ENCODE measurements at regions of chrX and their contacts with region 1.

Region 1: GRCh38 chrX:110146521-110146920 is 143.6 kb downstream of the TMEM164 start:
- DNase-seq: peak in 2 of 5 donors; percentile 14 to 17
- H3K4me3 ChIP-seq: no peak overlapping the region
- H3K4me3 Mint-ChIP-seq: no peak overlapping the region
- H3K27ac ChIP-seq: no peak overlapping the region
- H3K27ac Mint-ChIP-seq: peak overlapping the region in 1 of 8 donors; percentile 60
- H3K4me1 ChIP-seq: peaks cover 6% of the 10 kb centered on the region
- H3K4me1 Mint-ChIP-seq: peaks cover 5 to 11% (median 11%) of the 10 kb centered on the region in 3 donors
- H3K27me3 ChIP-seq: no peaks in the 10 kb centered on the region
- H3K27me3 Mint-ChIP-seq: peaks cover 0 to 4% of the 10 kb centered on the region in 2 donors

Region 2: GRCh38 chrX:110136136-110136535 is 10.4 kb before region 1 on chrX:
- CTCF ChIA-PET with region 1: interaction called, 11 read pairs
- POLR2A ChIA-PET with region 1: no interaction called
- DNase-seq: no peak
- H3K4me3 ChIP-seq: no peak overlapping the region
- H3K4me3 Mint-ChIP-seq: no peak overlapping the region
- H3K27ac ChIP-seq: no peak overlapping the region
- H3K27ac Mint-ChIP-seq: peak overlapping the region in 1 of 8 donors; percentile 8
- H3K4me1 ChIP-seq: no peaks in the 10 kb centered on the region
- H3K4me1 Mint-ChIP-seq: no peaks in the 10 kb centered on the region
- H3K27me3 ChIP-seq: no peaks in the 10 kb centered on the region
- H3K27me3 Mint-ChIP-seq: peaks cover 0 to 2% of the 10 kb centered on the region in 2 donors

Region 3: GRCh38 chrX:110407910-110408545 is 261.5 kb after region 1 on chrX:
- CTCF ChIA-PET with region 1: interaction called, 211 read pairs
- POLR2A ChIA-PET with region 1: no interaction called
- DNase-seq: peak; percentile 6 to 50 (median 38)
- H3K4me3 ChIP-seq: no peak overlapping the region
- H3K4me3 Mint-ChIP-seq: no peak overlapping the region
- H3K27ac ChIP-seq: no peak overlapping the region
- H3K27ac Mint-ChIP-seq: no peak overlapping the region
- H3K4me1 ChIP-seq: no peaks in the 10 kb centered on the region
- H3K4me1 Mint-ChIP-seq: peaks cover 1 to 2% (median 2%) of the 10 kb centered on the region in 3 donors
- H3K27me3 ChIP-seq: no peaks in the 10 kb centered on the region
- H3K27me3 Mint-ChIP-seq: peaks cover 5 to 10% of the 10 kb centered on the region in 2 donors

Region 4: GRCh38 chrX:110412971-110413721 is 266.6 kb after region 1 on chrX:
- CTCF ChIA-PET with region 1: interaction called, 211 read pairs
- POLR2A ChIA-PET with region 1: no interaction called
- DNase-seq: peak; percentile 45 to 71 (median 46)
- H3K4me3 ChIP-seq: no peak overlapping the region
- H3K4me3 Mint-ChIP-seq: no peak overlapping the region
- H3K27ac ChIP-seq: no peak overlapping the region
- H3K27ac Mint-ChIP-seq: no peak overlapping the region
- H3K4me1 ChIP-seq: no peaks in the 10 kb centered on the region
- H3K4me1 Mint-ChIP-seq: peaks cover 3 to 6% (median 4%) of the 10 kb centered on the region in 3 donors
- H3K27me3 ChIP-seq: no peaks in the 10 kb centered on the region
- H3K27me3 Mint-ChIP-seq: peaks cover 7 to 10% of the 10 kb centered on the region in 2 donors

Measured in CD8-positive, alpha-beta memory T cell (primary cell).